Activated CD4-positive, alpha-beta memory T cell treated with anti-CD3 and anti-CD28 coated beads, Interleukin-2, amount 10 ng/mL, durations not matched to agents 7 days and 5 days (primary cell): ENCODE measurements at regions of chr1 and their contacts with region 1.

Region 1: DNA sequence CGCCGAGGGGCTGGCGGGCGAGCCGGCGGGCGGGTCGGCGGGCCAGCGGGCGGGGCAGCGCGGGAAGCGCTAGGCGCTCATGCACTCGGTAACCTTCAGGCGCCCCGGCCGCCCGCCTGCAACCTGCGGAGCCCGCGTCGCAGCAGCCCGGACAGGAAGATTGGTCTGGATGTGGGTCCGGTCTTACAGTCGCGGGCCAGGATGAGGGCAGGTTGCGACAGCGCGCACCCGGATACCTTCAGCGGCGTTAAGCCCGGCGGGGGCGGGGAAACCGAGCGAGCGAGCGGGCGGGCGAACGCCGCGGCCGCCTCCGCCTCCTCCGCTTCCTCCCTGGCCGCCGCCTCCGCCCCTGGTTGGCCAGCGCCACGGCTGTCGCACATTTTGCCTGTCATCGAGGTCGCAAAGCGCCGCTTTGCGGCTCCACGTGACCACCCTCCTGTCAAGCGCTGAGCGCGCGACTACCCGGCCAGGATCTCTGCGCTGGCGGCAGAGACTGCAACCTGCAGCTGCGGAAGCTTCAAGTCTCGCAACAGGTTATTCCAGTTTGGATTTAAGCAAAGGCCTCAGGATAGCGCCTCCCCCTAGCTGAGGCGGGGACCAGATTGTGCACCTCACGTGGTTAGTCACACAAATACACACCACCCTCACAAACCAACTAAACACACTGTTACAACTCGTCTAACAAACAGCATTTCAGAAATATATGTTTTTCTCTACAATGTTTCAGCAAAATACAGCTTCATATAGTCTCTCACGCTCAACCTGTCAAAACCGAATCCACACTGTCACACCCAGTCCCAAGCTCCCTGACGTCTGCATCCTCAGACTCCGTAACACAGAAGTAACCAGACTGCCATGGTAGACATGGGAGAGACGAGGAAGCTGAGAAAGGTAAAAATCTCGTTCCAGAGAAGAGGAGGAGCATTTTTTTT is at the start of gene FAF1:
- DNase-seq: peak; percentile 99
- H3K4me3 Mint-ChIP-seq: peak within 1 kb of the TSS; percentile 88
- H3K27ac Mint-ChIP-seq: peak within 1 kb of the TSS; percentile 90
- H3K4me1 Mint-ChIP-seq: peaks cover 21% of the 10 kb centered on the region
- H3K27me3 Mint-ChIP-seq: peaks cover 3% of the 10 kb centered on the region
- total RNA-seq, gene FAF1: 71.3 to 75.1 TPM

Region 2: GRCh38 chr1:50929376-50929958 is 30.7 kb before region 1 on chr1:
- CTCF ChIA-PET with region 1: interaction called, 10 read pairs
- POLR2A ChIA-PET with region 1: interaction called, 6 read pairs
- DNase-seq: no peak
- H3K4me3 Mint-ChIP-seq: no peak overlapping the region
- H3K27ac Mint-ChIP-seq: no peak overlapping the region
- H3K4me1 Mint-ChIP-seq: peaks cover 16% of the 10 kb centered on the region
- H3K27me3 Mint-ChIP-seq: no peaks in the 10 kb centered on the region

Region 3: DNA sequence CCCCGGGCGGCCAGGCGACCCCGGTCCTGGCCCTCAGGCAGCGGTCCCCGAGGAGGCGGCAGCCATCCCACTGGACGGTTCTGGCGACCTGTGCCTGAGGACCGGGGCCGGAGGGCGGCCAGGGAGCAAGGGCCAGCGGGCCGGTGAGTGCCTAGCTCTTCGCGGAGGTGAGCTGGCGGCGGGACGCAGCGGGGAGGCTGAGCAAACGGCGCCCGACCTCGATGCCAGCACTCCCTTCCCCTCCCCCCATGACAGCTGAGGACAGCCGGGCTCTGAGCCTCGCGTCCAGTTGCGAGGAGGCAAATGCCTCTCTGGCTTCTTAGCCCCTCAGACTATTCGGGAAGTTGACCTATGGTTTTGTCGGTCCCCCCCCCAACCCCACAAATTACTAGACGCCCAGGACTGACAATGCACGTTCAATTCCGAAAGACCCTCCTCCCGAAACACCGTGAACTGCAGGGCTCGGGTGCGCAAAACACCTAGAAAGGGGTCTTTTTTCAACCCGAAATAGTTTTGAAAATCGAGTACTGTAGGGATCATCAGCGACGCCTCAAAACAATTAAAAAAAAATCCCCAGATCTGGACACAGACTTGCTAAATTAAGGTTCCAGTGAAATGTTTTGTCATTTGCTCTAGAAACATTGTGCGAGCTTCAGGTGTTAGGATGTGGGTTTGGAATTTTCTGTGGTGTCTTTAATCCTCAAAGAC is 18.1 kb after region 1 on chr1:
- CTCF ChIA-PET with region 1: interaction called, 6 read pairs
- POLR2A ChIA-PET with region 1: interaction called, 53 read pairs
- DNase-seq: peak; percentile 24
- H3K4me3 Mint-ChIP-seq: peak overlapping the region; percentile 76
- H3K27ac Mint-ChIP-seq: peak overlapping the region; percentile 58
- H3K4me1 Mint-ChIP-seq: peaks cover 28% of the 10 kb centered on the region
- H3K27me3 Mint-ChIP-seq: peaks cover 63% of the 10 kb centered on the region